ENCODE measurements at regions of chr6 and their contacts with region 1.

Region 1: DNA sequence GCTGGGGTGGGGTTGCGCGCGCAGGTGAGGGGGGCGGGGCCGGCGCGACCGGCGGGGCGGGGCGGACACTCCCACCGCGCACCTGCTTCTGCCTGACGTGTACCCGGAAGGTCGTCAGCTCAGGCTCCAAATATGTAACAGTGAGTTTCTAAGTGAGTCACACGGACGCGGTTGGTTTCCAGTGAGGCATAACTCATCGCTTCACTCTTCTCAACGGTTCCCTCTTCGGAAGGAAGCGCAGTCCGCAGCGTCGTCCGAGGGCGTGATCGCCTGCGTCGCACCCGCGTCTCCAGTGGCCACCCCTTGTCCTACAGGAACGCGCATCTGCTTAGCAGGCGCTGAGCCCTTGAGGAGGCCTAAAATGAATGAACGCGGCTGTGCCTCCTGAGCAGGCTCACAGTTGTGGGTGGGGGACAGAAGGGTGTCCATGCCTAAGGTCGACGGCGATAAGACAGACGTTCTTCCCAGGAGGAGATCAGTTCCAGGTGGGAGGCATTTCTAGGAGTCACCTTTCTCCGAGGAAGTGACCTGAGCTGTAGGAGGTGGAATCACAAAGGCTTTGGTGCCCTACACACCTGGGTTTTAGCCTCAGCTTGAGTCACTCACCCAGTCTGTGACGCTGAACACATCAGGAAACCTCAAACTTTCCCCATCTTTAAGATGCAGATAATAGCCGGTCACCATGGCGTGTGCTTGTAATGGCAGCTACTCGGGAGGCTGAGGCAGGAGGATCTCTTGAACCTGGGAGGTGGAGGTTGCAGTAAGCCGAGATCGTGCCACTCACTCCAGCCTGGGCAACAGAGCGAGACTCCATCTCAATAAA is 50.9 kb upstream of the EZR start:
- DNase-seq: peak; percentile 98
- ATAC-seq: peak; percentile 91
- H3K4me3 ChIP-seq: peak overlapping the region; percentile 62
- H3K27ac ChIP-seq: peak overlapping the region; percentile 91
- H3K4me1 ChIP-seq: peaks cover 39% of the 10 kb centered on the region
- H3K27me3 ChIP-seq: no peaks in the 10 kb centered on the region
- CTCF ChIP-seq: peak; percentile 10 to 43 (median 34); a peak in 4 of 6 replicates
- EP300 ChIP-seq: peak; percentile 96 to 97; a peak in 3 of 4 replicates
- POLR2A ChIP-seq: peak; percentile 98
- RAD21 ChIP-seq: peak; percentile 38

Region 2: GRCh38 chr6:158704181-158704822 is 165.7 kb before region 1 on chr6:
- CTCF ChIA-PET with region 1: interaction called, 5 read pairs
- POLR2A ChIA-PET with region 1: interaction called, 3 read pairs
- RAD21 ChIA-PET with region 1: no interaction called
- SMC1A ChIA-PET with region 1: no interaction called
- in situ Hi-C with region 1: no loop called
- intact Hi-C with region 1: loop called (anchors 5 kb)
- DNase-seq: no peak
- ATAC-seq: peak; percentile 99
- H3K4me3 ChIP-seq: peak overlapping the region; percentile 45; the same call in 1 of the 2 replicates
- H3K27ac ChIP-seq: no peak overlapping the region
- H3K4me1 ChIP-seq: peaks cover 9% of the 10 kb centered on the region
- H3K27me3 ChIP-seq: no peaks in the 10 kb centered on the region
- CTCF ChIP-seq: peak; percentile 97 to 99 (median 98); a peak in 5 of 6 replicates
- EP300 ChIP-seq: no peak
- POLR2A ChIP-seq: no peak
- RAD21 ChIP-seq: peak; percentile 97

Region 3: DNA sequence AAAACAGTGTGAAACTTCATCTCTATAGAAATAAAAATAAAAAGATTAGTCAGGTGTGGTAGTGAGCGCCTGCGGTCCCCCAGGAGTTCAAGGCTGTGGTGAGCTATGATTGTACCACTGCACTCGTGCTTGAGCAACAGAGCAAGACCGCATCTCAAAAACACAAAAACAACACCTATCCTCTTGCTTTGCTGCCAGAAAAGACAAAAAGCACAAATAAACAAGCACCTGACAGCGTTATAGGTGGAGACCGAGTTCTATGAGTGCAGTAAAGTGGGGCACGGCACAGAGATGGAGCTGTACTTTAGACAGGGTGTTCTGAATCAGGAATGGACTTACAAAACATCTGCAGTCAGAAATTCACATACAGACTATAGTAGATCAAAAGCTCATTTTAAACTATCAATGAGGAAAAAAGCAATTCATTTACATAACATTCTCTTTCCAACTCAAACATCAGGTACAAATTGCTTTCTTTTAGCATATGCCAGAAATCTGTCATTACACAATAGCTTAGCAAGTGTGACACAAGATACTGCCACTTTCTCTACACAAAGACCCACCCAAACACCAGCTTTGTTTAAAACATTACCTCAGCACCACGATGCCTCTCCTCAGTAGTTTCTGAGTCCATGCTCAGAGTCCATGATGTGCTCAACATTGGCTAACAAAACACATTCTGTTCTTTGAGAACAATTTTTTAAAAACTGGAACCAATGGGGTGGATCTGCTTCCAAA is 60.9 kb before region 1 on chr6:
- CTCF ChIA-PET with region 1: interaction called, 17 read pairs
- POLR2A ChIA-PET with region 1: interaction called, 9 read pairs
- RAD21 ChIA-PET with region 1: interaction called, 16 read pairs
- SMC1A ChIA-PET with region 1: interaction called, 12 read pairs
- in situ Hi-C with region 1: no loop called
- intact Hi-C with region 1: no loop called
- DNase-seq: peak; percentile 80
- ATAC-seq: peak; percentile 69
- H3K4me3 ChIP-seq: peak overlapping the region; percentile 29; the same call in 1 of the 2 replicates
- H3K27ac ChIP-seq: peak overlapping the region; percentile 54
- H3K4me1 ChIP-seq: peaks cover 76% of the 10 kb centered on the region
- H3K27me3 ChIP-seq: no peaks in the 10 kb centered on the region
- CTCF ChIP-seq: no peak
- EP300 ChIP-seq: peak; percentile 75 to 91
- POLR2A ChIP-seq: no peak
- RAD21 ChIP-seq: no peak

Region 4: DNA sequence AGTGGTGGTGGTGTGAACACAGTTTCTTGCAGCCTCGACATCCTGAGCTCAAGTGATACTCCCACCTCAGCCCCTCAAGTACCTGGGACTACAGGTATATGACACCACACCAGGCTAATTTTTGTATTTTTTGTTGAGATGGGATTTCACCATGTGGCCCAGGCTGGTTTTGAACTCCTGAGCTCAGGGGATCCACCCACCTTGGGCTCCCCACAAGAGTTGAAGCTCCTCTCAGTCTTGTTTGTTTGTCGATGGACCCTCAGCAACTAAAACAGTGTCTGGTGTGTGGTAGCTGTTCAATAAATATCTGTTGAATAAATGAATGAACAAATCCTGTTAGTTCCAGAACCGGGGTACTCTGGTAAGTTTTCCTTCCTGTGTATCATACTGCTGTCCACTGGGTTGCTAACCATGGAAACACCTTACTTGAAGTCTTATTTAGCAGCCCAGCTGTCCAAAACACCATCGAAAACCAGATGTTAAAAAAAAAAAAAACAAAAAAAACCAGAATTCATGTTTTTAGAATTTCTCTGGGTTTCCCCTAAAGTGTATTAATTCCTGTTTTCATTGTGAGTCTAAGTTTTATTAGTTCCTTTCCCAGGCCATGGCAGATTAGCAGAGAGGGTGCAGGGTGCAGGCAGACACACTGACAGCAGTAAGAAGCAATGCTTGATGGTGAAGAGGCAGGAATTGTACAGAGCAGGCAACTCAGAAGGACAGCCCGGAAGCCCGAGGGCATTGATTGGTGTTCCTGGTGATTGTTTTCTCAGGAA is 43.0 kb before region 1 on chr6:
- CTCF ChIA-PET with region 1: interaction called, 3 read pairs
- POLR2A ChIA-PET with region 1: interaction called, 11 read pairs
- RAD21 ChIA-PET with region 1: interaction called, 8 read pairs
- SMC1A ChIA-PET with region 1: interaction called, 52 read pairs
- in situ Hi-C with region 1: no loop called
- intact Hi-C with region 1: loop called (anchors 2 kb)
- DNase-seq: no peak
- ATAC-seq: peak; percentile 88
- H3K4me3 ChIP-seq: no peak overlapping the region; the same call in 1 of the 2 replicates
- H3K27ac ChIP-seq: peak overlapping the region; percentile 58
- H3K4me1 ChIP-seq: peaks cover 15% of the 10 kb centered on the region
- H3K27me3 ChIP-seq: no peaks in the 10 kb centered on the region
- CTCF ChIP-seq: no peak
- EP300 ChIP-seq: peak in 1 of 2 experiments; percentile 83; a peak in 2 of 4 replicates
- POLR2A ChIP-seq: no peak
- RAD21 ChIP-seq: 0 out of 2 replicates have a peak, but pooled peaks have one; percentile 9

Region 5: DNA sequence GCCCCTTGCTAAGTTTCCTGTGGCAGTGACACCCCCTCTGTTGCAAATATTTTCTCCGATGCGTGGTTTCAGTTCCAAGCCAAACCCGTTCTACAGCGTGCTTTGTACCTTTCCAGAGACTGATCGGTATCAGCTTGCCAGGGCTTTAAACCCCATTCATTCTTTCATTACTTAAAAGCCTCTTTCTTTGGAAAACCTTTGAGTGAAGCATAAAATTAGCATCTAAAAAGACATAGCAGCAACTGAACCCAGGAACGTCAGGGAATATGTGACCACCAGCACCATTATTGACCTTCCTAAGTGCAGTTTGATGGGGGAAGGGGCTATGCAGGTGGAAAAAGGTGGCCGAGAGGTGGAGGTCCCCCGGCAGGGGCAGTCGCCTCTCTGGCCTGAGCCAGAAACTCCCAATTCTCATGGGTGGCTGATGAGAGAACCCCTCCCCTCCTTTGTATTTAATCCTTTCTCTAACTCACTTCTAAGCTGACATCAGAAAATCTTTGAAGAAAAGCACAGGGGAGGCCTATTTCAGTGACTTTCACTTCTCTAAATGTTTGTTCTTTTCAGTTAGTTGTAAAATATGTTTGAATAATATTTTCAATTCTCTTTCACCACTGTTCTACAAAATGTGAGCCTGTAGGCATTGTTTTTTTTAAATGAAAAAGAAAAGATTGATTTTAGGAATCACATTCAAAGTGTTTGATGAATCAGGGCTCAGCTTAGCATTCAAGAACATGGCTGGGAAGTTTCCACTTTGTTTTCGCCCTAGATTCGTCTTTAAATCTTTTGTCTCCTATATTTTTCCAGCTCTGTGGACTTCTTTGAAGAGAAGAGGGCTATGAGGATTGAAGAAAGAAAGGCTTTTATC is 40.7 kb after region 1 on chr6:
- CTCF ChIA-PET with region 1: interaction called, 7 read pairs
- POLR2A ChIA-PET with region 1: interaction called, 12 read pairs
- RAD21 ChIA-PET with region 1: interaction called, 29 read pairs
- SMC1A ChIA-PET with region 1: interaction called, 29 read pairs
- in situ Hi-C with region 1: no loop called
- intact Hi-C with region 1: loop called (anchors 2 kb)
- DNase-seq: peak; percentile 54
- ATAC-seq: peak; percentile 90
- H3K4me3 ChIP-seq: peak overlapping the region; percentile 56
- H3K27ac ChIP-seq: peak overlapping the region; percentile 99
- H3K4me1 ChIP-seq: peaks cover 33% of the 10 kb centered on the region
- H3K27me3 ChIP-seq: no peaks in the 10 kb centered on the region
- CTCF ChIP-seq: no peak
- EP300 ChIP-seq: peak; percentile 36 to 78; a peak in 3 of 4 replicates
- POLR2A ChIP-seq: peak; percentile 51; the same call in 1 of the 2 replicates
- RAD21 ChIP-seq: peak; percentile 35; the same call in 1 of the 2 replicates

Region 6: DNA sequence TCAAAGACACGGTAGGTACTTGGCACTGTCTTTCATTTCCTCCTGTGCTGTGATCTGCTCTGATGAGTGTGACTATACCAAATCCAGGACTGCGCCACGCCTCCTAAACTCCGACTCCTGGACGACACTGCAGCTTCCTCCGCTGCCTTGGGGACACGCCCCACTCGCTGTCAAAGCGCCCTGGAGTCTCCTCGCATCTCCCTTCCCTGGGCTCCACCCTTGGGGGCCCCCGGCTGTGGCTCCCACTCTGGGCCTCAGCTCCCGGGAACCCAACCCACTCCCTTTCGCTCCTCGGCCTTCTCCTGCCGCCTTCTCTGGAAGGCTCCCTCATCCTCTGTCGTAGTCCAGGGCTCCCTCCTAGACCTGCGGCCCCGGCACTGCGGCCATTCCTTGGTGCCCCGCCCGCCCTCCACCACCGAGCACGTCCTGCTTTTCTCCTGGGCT is 68.8 kb after region 1 on chr6:
- CTCF ChIA-PET with region 1: no interaction called
- POLR2A ChIA-PET with region 1: no interaction called
- RAD21 ChIA-PET with region 1: no interaction called
- SMC1A ChIA-PET with region 1: no interaction called
- in situ Hi-C with region 1: no loop called
- intact Hi-C with region 1: no loop called
- DNase-seq: no peak
- ATAC-seq: peak; percentile 87
- H3K4me3 ChIP-seq: peak overlapping the region; percentile 55
- H3K27ac ChIP-seq: no peak overlapping the region
- H3K4me1 ChIP-seq: peaks cover 9% of the 10 kb centered on the region
- H3K27me3 ChIP-seq: no peaks in the 10 kb centered on the region
- CTCF ChIP-seq: no peak
- EP300 ChIP-seq: no peak
- POLR2A ChIP-seq: no peak
- RAD21 ChIP-seq: no peak

Region 7: GRCh38 chr6:158999666-159000403 is 129.8 kb after region 1 on chr6 and contains the start of gene RSPH3:
- CTCF ChIA-PET with region 1: no interaction called
- POLR2A ChIA-PET with region 1: interaction called, 14 read pairs
- RAD21 ChIA-PET with region 1: no interaction called
- SMC1A ChIA-PET with region 1: interaction called, 7 read pairs
- in situ Hi-C with region 1: no loop called
- intact Hi-C with region 1: no loop called
- DNase-seq: peak; percentile 77
- ATAC-seq: peak; percentile 96
- H3K4me3 ChIP-seq: peak within 1 kb of the TSS; percentile 81
- H3K27ac ChIP-seq: peak within 1 kb of the TSS; percentile 87
- H3K4me1 ChIP-seq: peaks cover 3% of the 10 kb centered on the region; the same call in 1 of the 2 replicates
- H3K27me3 ChIP-seq: no peaks in the 10 kb centered on the region
- CTCF ChIP-seq: peak in 1 of 3 experiments; percentile 34; a peak in 2 of 6 replicates
- EP300 ChIP-seq: no peak
- POLR2A ChIP-seq: peak; percentile 98
- RAD21 ChIP-seq: peak; percentile 21; the same call in 1 of the 2 replicates
- polyA plus RNA-seq, gene RSPH3: 0.40 to 0.51 TPM

Region 8: DNA sequence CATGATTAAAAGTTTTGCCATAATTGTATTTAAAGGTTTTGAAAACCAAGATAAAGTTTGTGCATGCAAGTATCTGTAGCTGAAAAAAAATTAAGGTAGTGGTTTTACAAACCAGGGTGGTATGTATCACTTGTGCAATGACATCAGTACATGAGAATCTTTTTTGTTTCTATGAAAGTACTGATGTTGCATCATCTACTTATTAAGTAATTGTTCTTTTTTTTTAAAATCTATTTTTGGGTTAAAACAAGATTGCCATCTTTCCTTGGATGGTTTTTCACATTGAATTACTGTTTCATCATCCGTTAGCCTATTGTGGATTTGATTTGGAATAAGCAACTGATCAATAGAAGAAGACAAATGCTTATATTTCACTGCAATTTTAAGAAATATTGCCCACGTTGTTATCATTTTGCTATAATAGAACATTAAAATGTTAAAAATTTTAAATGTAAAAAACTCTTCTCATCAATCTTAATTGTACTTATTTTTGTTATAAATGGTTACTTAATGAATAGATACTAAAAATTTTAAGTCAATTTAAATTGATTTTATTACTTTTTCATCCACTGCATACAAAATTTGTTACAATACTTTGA is 214.6 kb after region 1 on chr6:
- CTCF ChIA-PET with region 1: no interaction called
- POLR2A ChIA-PET with region 1: no interaction called
- RAD21 ChIA-PET with region 1: no interaction called
- SMC1A ChIA-PET with region 1: no interaction called
- in situ Hi-C with region 1: no loop called
- intact Hi-C with region 1: no loop called
- DNase-seq: no peak
- ATAC-seq: peak; percentile 46; the same call in 2 of the 3 replicates
- H3K4me3 ChIP-seq: no peak overlapping the region
- H3K27ac ChIP-seq: no peak overlapping the region
- H3K4me1 ChIP-seq: peaks cover 4% of the 10 kb centered on the region; the same call in 1 of the 2 replicates
- H3K27me3 ChIP-seq: no peaks in the 10 kb centered on the region
- CTCF ChIP-seq: no peak
- EP300 ChIP-seq: no peak
- POLR2A ChIP-seq: no peak
- RAD21 ChIP-seq: no peak